A673 (cell line): ENCODE measurements at regions of chr1 and their contacts with region 1.

Region 1: DNA sequence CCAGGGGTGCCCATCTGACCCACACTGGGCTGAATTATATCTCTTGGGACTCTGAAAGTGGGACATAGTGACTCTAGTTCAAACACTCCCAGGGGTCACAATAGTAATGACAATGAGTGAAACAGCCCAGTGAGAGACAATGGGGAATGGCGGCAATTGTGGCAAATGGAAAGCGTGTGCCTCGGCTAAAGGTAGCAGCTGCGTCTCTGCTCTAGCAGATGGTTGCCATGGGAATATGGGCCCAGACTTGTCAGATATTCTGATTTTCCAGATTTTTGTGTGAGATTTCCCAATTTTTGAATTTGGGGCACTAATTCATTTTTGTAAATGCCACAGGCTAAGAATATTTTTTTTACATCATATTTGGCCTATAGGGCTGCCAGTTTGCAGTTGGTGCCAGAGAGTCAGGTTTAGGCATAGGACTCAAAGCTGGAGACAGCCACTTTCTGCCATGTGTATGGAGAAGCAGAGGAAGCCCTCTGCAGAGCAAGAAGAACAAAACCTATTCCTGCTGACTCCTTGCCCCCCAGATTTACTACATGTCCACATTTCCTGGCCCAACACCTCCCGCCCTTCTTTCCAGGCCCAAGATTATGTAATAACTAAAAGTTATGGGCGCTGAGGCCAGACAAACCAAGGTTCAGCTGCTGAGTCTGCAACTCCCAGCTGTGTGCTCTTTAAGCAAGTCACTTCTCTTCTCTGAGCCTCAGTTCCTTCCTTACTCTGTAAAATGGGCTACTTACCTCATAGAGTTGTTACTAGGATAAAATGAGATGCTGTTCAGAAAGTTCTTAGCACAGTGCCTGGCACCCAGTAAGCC is 21.6 kb upstream of the PTP4A2 start:
- DNase-seq: no peak
- H3K4me3 ChIP-seq: no peak overlapping the region
- H3K27ac ChIP-seq: no peak overlapping the region
- H3K4me1 ChIP-seq: peaks cover 13% of the 10 kb centered on the region
- H3K27me3 ChIP-seq: no peaks in the 10 kb centered on the region
- CTCF ChIP-seq: no peak

Region 2: DNA sequence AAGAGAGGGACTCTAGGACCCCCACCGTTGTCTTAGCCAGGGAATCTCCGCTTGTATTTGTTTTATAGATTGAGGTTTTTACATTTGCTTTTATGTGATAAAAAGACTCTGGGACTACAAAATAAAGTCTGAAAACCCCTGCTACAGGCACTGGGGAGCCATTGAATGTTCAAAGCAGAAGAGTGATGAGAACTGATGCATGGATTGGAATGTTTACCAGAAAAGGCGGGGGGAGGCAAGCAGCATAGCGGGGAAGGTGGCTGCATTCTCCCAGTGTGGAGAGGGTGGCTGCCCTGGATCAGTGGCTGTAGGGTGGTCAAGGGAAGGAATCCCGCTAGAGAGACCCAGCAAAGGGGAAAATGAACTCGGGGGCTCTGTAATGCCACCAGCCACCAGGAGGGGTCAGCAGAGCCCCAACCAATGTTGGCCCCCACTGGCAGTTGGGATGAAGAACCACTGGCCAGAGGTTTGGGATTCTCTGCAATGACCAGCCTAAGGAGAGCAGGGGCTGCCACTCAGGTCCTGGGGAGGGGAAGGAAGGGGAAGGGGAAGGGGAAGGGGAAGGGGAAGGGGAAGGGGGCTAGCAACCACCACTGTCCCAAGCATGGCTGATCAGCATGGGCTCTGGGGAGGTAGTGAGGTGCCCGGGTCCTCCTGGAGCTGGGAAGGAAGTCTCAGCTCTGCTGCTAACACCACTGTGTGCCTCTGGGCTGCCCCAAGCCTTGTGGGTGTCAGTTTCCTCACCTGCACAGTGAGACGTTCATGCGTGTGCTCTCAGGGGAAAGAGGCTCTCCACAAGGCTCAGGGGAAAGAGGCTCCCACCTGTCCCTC is 295.9 kb before region 1 on chr1:
- CTCF ChIA-PET with region 1: interaction called, 6 read pairs
- POLR2A ChIA-PET with region 1: no interaction called
- intact Hi-C with region 1: loop called (anchors 5 kb)
- DNase-seq: peak; percentile 54
- H3K4me3 ChIP-seq: no peak overlapping the region
- H3K27ac ChIP-seq: no peak overlapping the region
- H3K4me1 ChIP-seq: peaks cover 7% of the 10 kb centered on the region
- H3K27me3 ChIP-seq: no peaks in the 10 kb centered on the region
- CTCF ChIP-seq: peak; percentile 87

Region 3: DNA sequence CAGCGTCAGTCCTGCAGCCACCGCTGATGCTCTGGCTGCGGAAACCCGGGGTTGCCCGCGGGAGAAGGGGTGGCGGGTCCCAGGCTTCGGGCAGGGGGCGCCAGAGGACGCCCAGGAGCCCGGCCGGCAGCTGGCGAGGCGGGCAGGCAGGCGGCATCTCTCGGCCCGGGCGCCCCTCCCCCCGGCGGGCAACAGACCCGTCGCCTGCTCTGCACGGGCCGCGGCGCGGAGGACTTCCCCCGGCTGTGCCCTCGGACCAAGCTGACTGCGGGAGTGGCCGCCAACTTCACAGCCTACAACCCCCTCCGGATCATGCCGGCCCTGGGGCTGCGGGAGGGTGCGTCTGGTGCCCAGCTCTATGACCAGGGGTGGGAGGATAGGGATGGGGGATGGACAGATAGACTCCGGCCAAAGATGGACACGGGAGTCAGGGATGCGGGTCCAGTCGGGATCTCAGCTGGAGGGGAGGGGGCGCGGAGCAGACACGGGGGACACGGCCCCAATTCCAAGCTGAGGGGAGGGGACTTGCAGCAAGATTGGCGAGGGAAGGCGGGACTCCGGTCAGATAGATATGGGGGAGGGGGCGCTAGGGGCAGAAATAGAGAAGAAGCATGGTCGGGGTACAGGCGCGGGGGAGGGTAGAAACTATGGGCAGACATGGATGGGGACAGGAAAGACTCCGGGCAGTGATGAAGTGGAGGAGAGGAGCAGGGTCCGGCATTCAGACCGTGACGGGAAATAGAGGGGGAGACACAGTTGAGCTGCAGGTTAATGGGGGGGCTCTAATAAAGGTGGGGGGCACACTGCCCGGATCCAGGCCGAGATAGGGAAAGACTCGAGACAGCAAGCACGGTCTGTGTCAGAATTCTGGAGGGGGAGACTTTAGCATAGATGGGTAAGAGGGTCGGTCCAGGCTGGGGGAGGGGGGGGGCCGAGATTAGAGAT is 196.7 kb before region 1 on chr1:
- CTCF ChIA-PET with region 1: interaction called, 15 read pairs
- POLR2A ChIA-PET with region 1: no interaction called
- intact Hi-C with region 1: no loop called
- DNase-seq: peak; percentile 82
- H3K4me3 ChIP-seq: peak overlapping the region; percentile 64
- H3K27ac ChIP-seq: no peak overlapping the region
- H3K4me1 ChIP-seq: peaks cover 31% of the 10 kb centered on the region
- H3K27me3 ChIP-seq: no peaks in the 10 kb centered on the region
- CTCF ChIP-seq: peak; percentile 69

Region 4: GRCh38 chr1:31795801-31796621 is 163.7 kb before region 1 on chr1:
- CTCF ChIA-PET with region 1: interaction called, 3 read pairs
- POLR2A ChIA-PET with region 1: no interaction called
- intact Hi-C with region 1: loop called (anchors 5 kb)
- DNase-seq: peak; percentile 92
- H3K4me3 ChIP-seq: no peak overlapping the region
- H3K27ac ChIP-seq: no peak overlapping the region
- H3K4me1 ChIP-seq: peaks cover 34% of the 10 kb centered on the region
- H3K27me3 ChIP-seq: no peaks in the 10 kb centered on the region
- CTCF ChIP-seq: no peak

Region 5: GRCh38 chr1:31815752-31816500 is 143.8 kb before region 1 on chr1 and contains the start of gene SPOCD1:
- CTCF ChIA-PET with region 1: interaction called, 10 read pairs
- POLR2A ChIA-PET with region 1: no interaction called
- intact Hi-C with region 1: loop called (anchors 5 kb)
- DNase-seq: peak; percentile 89
- H3K4me3 ChIP-seq: no peak within 1 kb of the TSS
- H3K27ac ChIP-seq: no peak within 1 kb of the TSS
- H3K4me1 ChIP-seq: no peaks in the 10 kb centered on the region
- H3K27me3 ChIP-seq: no peaks in the 10 kb centered on the region
- CTCF ChIP-seq: peak; percentile 95
- total RNA-seq, gene SPOCD1: 0.58 and 0.85 TPM in 2 replicates

Region 6: DNA sequence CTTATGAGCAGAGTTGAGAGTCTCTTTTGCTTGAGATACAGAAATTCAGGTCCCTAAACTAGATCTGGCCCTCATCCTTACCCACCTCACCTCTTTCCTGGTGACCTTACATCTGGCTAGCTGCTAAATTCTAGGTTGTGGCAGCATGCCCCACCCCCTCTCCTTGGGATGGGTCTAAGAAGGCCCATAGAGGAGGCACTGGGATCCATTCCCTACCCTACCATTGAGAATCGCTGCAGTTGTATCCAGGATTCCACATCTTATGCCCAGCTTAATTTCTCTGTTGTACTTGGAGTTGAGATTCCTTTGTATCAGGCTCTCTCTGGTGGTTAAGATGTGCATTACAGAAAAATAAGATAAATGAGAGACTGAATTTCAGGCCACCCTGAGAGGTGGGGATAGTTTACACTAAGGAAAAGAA is 103.5 kb after region 1 on chr1:
- CTCF ChIA-PET with region 1: interaction called, 10 read pairs
- POLR2A ChIA-PET with region 1: no interaction called
- intact Hi-C with region 1: loop called (anchors 10 kb)
- DNase-seq: peak; percentile 87
- H3K4me3 ChIP-seq: no peak overlapping the region
- H3K27ac ChIP-seq: peak overlapping the region; percentile 77
- H3K4me1 ChIP-seq: peaks cover 39% of the 10 kb centered on the region
- H3K27me3 ChIP-seq: no peaks in the 10 kb centered on the region
- CTCF ChIP-seq: peak; percentile 72